K562 (cell line): ENCODE measurements at regions of chr1 and their contacts with region 1.

Region 1: GRCh38 chr1:205658943-205659581 is 21.2 kb downstream of the SLC45A3 start:
- DNase-seq: peak; percentile 88 to 92 (median 92)
- ATAC-seq: peak; percentile 95
- H3K4me3 ChIP-seq: no peak overlapping the region
- H3K27ac ChIP-seq: no peak overlapping the region
- H3K4me1 ChIP-seq: peaks cover 2 to 28% of the 10 kb centered on the region in 2 experiments; a peak in 3 of 5 replicates
- H3K27me3 ChIP-seq: peaks cover 0 to 5% of the 10 kb centered on the region in 2 experiments; a peak in 1 of 5 replicates
- CTCF ChIP-seq: peak; percentile 96
- EP300 ChIP-seq: no peak
- POLR2A ChIP-seq: no peak
- RAD21 ChIP-seq: peak; percentile 97 to 98

Region 2: GRCh38 chr1:205528887-205529825 is 129.9 kb before region 1 on chr1:
- CTCF ChIA-PET with region 1: interaction called, 62 read pairs
- POLR2A ChIA-PET with region 1: interaction called, 6 read pairs
- in situ Hi-C with region 1: loop called (anchors 5 kb)
- intact Hi-C with region 1: loop called (anchors 1 kb)
- DNase-seq: peak; percentile 87 to 96 (median 94)
- ATAC-seq: peak; percentile 95
- H3K4me3 ChIP-seq: peak overlapping the region; percentile 32
- H3K27ac ChIP-seq: no peak overlapping the region
- H3K4me1 ChIP-seq: peaks cover 0 to 37% of the 10 kb centered on the region in 2 experiments; a peak in 3 of 5 replicates
- H3K27me3 ChIP-seq: peaks cover 37 to 86% of the 10 kb centered on the region in 2 experiments; a peak in 4 of 5 replicates
- CTCF ChIP-seq: peak; percentile 92 to 95 (median 94)
- EP300 ChIP-seq: no peak
- POLR2A ChIP-seq: no peak
- RAD21 ChIP-seq: peak; percentile 81 to 95

Region 3: DNA sequence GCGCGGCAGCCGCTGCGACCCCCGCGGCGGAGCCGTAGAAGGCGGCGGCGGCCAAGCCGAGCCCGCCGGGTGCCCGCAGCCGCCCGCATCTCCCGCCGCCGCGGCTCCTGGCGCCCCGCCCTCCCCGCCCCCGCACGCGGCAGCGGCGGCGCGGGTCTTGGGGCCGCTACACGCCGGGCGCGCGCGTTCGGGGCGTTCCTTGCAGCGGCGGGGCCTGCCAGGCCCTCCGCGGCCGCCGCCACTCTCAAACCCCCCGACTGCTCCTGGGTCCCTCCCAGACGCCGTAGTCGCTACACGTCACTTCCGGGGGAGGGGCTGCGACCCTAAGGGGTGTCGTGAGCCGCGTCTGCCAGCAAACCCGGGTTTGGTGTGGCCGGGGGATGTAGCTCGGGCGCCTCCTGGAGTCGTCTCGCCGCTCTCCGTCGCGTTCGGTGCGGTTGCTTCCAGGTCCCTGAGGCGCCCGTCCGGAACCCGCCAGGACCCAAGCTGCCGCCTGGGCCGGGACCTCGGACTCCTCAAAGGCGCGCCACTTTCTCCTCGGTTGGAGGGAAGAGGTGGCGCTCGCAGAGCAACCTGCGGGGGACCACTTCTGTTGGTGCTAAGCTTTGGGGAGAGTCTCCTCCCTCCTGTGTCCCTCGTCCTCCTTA is 27.2 kb before region 1 on chr1 and contains the start of gene ELK4:
- CTCF ChIA-PET with region 1: no interaction called
- POLR2A ChIA-PET with region 1: interaction called, 10 read pairs
- in situ Hi-C with region 1: no loop called
- intact Hi-C with region 1: loop called (anchors 2 kb)
- DNase-seq: peak; percentile 99 to 100 (median 99)
- ATAC-seq: peak; percentile 90
- H3K4me3 ChIP-seq: peak within 1 kb of the TSS; percentile 62
- H3K27ac ChIP-seq: peak within 1 kb of the TSS; percentile 93
- H3K4me1 ChIP-seq: peaks cover 15% of the 10 kb centered on the region in 2 experiments
- H3K27me3 ChIP-seq: no peaks in the 10 kb centered on the region
- CTCF ChIP-seq: peak; percentile 80 to 94 (median 91)
- EP300 ChIP-seq: peak; percentile 51
- POLR2A ChIP-seq: peak; percentile 93
- RAD21 ChIP-seq: peak; percentile 88 to 90
- polyA plus RNA-seq, gene ELK4: 2.0 to 3.1 TPM

Region 4: GRCh38 chr1:205783904-205784303 is 124.8 kb after region 1 on chr1:
- CTCF ChIA-PET with region 1: interaction called, 4 read pairs
- POLR2A ChIA-PET with region 1: interaction called, 3 read pairs
- in situ Hi-C with region 1: no loop called
- intact Hi-C with region 1: loop called (anchors 5 kb)
- DNase-seq: no peak
- ATAC-seq: peak; percentile 9; the same call in 1 of the 3 replicates
- H3K4me3 ChIP-seq: no peak overlapping the region
- H3K27ac ChIP-seq: no peak overlapping the region
- H3K4me1 ChIP-seq: peaks cover 7 to 20% of the 10 kb centered on the region in 2 experiments; a peak in 4 of 5 replicates
- H3K27me3 ChIP-seq: no peaks in the 10 kb centered on the region; a peak in 1 of 5 replicates
- CTCF ChIP-seq: no peak
- EP300 ChIP-seq: no peak
- POLR2A ChIP-seq: no peak
- RAD21 ChIP-seq: no peak

Region 5: GRCh38 chr1:205977402-205978014 is 318.4 kb after region 1 on chr1:
- CTCF ChIA-PET with region 1: interaction called, 20 read pairs
- POLR2A ChIA-PET with region 1: interaction called, 3 read pairs
- in situ Hi-C with region 1: no loop called
- intact Hi-C with region 1: loop called (anchors 2 kb)
- DNase-seq: peak; percentile 79 to 92 (median 88)
- ATAC-seq: peak; percentile 97
- H3K4me3 ChIP-seq: no peak overlapping the region
- H3K27ac ChIP-seq: no peak overlapping the region
- H3K4me1 ChIP-seq: peaks cover 0 to 4% of the 10 kb centered on the region in 2 experiments; a peak in 1 of 5 replicates
- H3K27me3 ChIP-seq: peaks cover 22 to 41% of the 10 kb centered on the region in 2 experiments
- CTCF ChIP-seq: peak; percentile 96 to 98 (median 98)
- EP300 ChIP-seq: no peak
- POLR2A ChIP-seq: no peak
- RAD21 ChIP-seq: peak; percentile 99 to 100